ENCODE measurements at regions of chr5 and their contacts with region 1.

Region 1: GRCh38 chr5:150778517-150779396 is at the start of gene SMIM3:
- DNase-seq: peak; percentile 75
- H3K27ac ChIP-seq: peak within 1 kb of the TSS; percentile 82
- CTCF ChIP-seq: peak; percentile 76

Region 2: DNA sequence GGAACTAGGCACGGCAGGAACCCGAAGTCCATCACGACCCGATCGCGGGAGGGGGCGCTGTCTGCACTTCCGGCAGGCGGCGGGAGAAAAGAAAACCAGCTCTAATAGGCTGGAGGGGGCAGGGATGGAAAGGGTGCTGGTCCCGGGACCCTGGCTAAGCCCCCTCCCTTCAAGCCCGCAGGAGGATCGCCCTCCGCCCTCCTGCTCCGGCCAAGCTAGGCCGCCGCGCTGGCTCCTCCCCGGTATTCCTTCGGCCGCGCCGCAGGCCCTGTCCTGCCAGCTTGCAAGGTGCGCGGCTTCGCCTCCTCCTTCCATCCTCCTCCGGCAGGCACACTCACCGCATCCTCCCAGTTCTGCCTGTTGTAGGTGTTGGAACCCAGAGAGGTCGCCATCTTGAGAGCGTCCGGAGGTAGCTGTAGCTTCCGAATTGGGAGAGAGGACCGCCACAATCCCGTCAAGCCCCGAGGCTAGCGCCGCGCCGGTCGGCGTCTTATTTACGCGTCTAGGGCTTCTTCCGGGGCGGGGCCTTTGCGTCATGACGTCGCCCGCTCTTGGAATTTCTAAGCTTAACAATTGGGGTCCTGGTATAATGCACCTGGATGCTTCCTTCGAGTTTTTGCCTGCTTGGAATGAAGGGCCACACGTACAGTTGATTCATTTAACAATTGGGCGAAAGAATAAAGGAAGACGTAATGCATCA is 78.0 kb before region 1 on chr5 and contains the start of gene RBM22:
- CTCF ChIA-PET with region 1: interaction called, 12 read pairs
- POLR2A ChIA-PET with region 1: no interaction called
- DNase-seq: peak; percentile 89
- H3K27ac ChIP-seq: peak within 1 kb of the TSS; percentile 89
- CTCF ChIP-seq: peak; percentile 84

Region 3: GRCh38 chr5:150763023-150763769 is 15.6 kb before region 1 on chr5:
- CTCF ChIA-PET with region 1: interaction called, 10 read pairs
- POLR2A ChIA-PET with region 1: interaction called, 6 read pairs
- DNase-seq: peak; percentile 90
- H3K27ac ChIP-seq: peak overlapping the region; percentile 66
- CTCF ChIP-seq: no peak